Tibial artery (tissue), 4 donors: ENCODE measurements at regions of chr4 and their contacts with region 1.

Region 1: GRCh38 chr4:18689308-18690115 is 668.0 kb upstream of the LCORL start:
- DNase-seq: peak in 1 of 2 donors; percentile 32
- H3K4me3 ChIP-seq: no peak overlapping the region
- H3K27ac ChIP-seq: no peak overlapping the region
- H3K4me1 ChIP-seq: peaks cover 0 to 8% (median 1%) of the 10 kb centered on the region in 4 donors
- H3K27me3 ChIP-seq: no peaks in the 10 kb centered on the region
- CTCF ChIP-seq: peak; percentile 58 to 76

Region 2: GRCh38 chr4:20684852-20685763 is 1995.6 kb after region 1 on chr4:
- intact Hi-C with region 1: loop called (anchors 5 kb)
- DNase-seq: no peak
- H3K4me3 ChIP-seq: no peak overlapping the region
- H3K27ac ChIP-seq: no peak overlapping the region
- H3K4me1 ChIP-seq: no peaks in the 10 kb centered on the region
- H3K27me3 ChIP-seq: no peaks in the 10 kb centered on the region
- CTCF ChIP-seq: peak; percentile 53 to 54